ENCODE measurements at regions of chr7 and their contacts with region 1.

Region 1: GRCh38 chr7:129903935-129904334 is 48.8 kb downstream of the UBE2H start:
- DNase-seq: peak; percentile 52
- H3K4me3 ChIP-seq: no peak overlapping the region
- H3K27ac ChIP-seq: no peak overlapping the region
- H3K4me1 ChIP-seq: peaks cover 10% of the 10 kb centered on the region
- CTCF ChIP-seq: no peak

Region 2: GRCh38 chr7:129202058-129202777 is 701.7 kb before region 1 on chr7:
- CTCF ChIA-PET with region 1: no interaction called
- POLR2A ChIA-PET with region 1: no interaction called
- intact Hi-C with region 1: no loop called
- DNase-seq: no peak
- H3K4me3 ChIP-seq: no peak overlapping the region
- H3K27ac ChIP-seq: no peak overlapping the region
- H3K4me1 ChIP-seq: no peaks in the 10 kb centered on the region
- CTCF ChIP-seq: no peak

Region 3: DNA sequence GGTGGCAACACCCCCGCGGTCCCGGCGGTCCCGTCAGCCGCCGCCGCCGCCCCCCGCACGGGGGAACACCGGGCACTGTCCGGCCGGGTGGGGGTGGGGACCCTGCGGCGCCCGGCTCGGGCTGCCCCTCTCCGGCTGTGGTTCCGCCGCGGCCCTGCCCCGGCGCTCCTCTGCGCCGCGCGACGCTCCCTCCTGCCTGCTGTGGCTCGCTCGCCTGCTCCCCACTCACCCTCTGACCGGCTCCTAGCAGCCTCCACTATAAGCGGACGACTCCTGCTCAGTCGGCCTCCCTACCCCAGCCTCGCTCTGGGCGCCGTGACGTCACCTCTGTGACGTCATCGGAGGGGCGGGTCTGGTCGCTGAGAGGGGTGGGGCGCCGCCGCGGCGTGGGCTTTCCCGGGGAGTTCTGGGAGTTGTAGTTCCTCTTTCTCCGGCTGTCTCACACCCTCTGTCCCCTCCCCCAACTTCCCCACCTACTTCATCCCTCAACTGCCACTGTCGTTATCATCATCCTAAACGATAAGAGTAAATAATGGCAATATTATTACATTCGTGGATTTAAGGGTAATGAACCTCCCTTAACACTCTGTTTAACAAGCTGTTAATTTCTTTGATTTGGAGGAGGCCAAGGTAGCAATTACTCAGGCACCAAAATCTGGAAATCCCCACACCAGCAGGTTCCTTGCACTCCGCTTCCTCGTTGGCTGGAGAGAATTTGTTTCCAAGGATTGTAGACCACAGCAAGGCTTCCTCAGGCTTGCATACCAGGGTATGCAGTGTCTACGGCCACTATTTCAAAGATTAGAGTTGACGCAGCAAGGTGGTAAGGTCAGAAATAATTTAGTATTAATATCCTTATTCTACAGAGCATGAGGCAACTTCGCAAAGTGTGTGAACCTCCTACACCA is 49.0 kb after region 1 on chr7 and contains the start of gene UBE2H:
- CTCF ChIA-PET with region 1: no interaction called
- POLR2A ChIA-PET with region 1: interaction called, 14 read pairs
- intact Hi-C with region 1: no loop called
- DNase-seq: peak; percentile 91
- H3K4me3 ChIP-seq: peak within 1 kb of the TSS; percentile 81
- H3K27ac ChIP-seq: peak within 1 kb of the TSS; percentile 82
- H3K4me1 ChIP-seq: peaks cover 26% of the 10 kb centered on the region
- CTCF ChIP-seq: no peak
- total RNA-seq, gene UBE2H: 12.7 and 15.0 TPM in 2 replicates